ENCODE measurements at regions of chr6 and their contacts with region 1.

Region 1: DNA sequence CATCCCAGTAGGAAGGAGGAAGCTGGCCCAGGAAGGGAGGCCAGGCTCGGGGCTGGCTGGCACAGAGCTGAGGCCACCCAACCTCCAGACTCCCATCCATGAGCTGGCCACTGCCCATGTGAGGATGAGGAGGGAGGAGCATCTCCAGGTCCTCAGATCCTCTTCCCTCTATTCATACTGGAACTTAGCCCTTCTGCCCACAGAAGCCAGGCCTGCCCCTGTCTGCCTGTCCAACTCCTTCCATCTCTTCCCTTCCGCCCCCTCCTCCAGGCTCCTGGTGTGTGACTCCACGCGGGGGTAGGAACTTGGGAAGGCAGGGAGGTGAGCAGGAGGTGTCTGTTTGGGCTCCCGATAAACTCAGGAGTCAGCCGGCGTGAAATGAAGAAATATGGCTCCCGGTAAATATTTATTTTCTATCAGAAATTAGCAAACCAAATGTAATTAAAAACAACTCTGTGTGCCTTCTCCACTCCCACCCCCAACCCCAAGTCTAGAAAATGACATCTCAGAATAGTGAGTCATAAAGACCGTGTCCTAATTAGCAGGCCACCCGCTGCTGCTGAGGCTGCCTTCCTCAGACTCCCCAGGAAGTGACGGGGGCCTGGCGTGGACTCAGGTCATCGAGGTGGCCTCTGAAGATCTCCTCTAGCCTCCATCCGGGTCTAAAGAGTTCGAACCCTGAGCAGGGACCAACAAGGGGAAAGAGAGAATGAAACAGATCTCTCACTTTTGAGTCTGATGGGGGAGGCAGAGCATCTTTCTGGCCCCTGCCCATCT is 81.9 kb downstream of the MDGA1 start:
- DNase-seq: peak; percentile 77
- H3K4me3 ChIP-seq: no peak overlapping the region
- H3K27ac ChIP-seq: no peak overlapping the region
- H3K4me1 ChIP-seq: peaks cover 48% of the 10 kb centered on the region
- H3K27me3 ChIP-seq: no peaks in the 10 kb centered on the region
- CTCF ChIP-seq: no peak

Region 2: DNA sequence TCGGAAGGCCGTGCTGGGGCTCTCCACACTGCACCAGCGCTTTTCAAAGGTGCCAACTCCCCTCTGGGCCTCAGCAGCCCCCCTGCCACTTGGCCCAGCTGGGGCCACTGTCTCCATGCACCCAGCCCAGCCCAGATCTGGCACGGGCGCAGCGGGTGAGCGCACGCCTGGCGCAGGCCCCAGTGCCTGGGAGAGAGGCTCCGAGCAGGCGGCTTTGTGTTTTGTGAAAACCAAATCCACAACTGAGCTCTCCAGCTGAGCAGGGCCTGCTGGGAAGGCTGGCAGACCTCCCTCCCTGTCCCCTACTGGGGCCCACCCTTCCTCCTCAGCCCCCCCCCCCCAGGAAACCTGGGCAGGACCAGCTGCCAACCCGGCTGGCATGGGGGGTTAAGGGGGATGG is 64.9 kb after region 1 on chr6:
- CTCF ChIA-PET with region 1: no interaction called
- POLR2A ChIA-PET with region 1: interaction called, 10 read pairs
- intact Hi-C with region 1: no loop called
- DNase-seq: peak; percentile 56
- H3K4me3 ChIP-seq: no peak overlapping the region
- H3K27ac ChIP-seq: peak overlapping the region; percentile 41
- H3K4me1 ChIP-seq: peaks cover 15% of the 10 kb centered on the region
- H3K27me3 ChIP-seq: no peaks in the 10 kb centered on the region
- CTCF ChIP-seq: no peak

Region 3: DNA sequence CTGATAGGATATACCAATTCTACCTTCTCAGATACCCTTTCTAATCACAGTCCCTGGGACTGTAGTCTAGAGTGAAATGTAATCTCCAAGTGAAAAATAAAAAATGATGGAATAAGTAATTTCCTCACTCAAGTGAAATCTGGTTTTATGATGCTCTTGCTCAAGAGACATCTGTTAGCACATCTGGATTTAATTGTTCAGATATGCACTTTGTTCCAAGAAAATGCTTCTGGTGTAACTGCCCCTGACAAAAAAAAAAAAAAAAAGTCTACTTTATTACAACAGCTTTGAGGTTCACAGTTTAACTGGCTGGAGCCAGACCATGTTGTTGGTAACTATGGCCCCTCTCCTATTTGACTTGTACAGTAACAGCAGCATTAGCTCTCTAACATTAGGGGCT is 772.2 kb after region 1 on chr6:
- CTCF ChIA-PET with region 1: no interaction called
- POLR2A ChIA-PET with region 1: no interaction called
- intact Hi-C with region 1: no loop called
- DNase-seq: peak; percentile 44
- H3K4me3 ChIP-seq: no peak overlapping the region
- H3K27ac ChIP-seq: no peak overlapping the region
- H3K4me1 ChIP-seq: peaks cover 10% of the 10 kb centered on the region
- H3K27me3 ChIP-seq: no peaks in the 10 kb centered on the region
- CTCF ChIP-seq: no peak

Measured in A673 (cell line).